Activated CD8-positive, alpha-beta T cell treated with anti-CD3 and anti-CD28 coated beads, Interleukin-2, amount 10 ng/mL, durations not matched to agents 7 days and 5 days (primary cell): ENCODE measurements at regions of chr9 and their contacts with region 1.

Region 1: GRCh38 chr9:97598461-97599288 is 34.5 kb downstream of the TSTD2 start:
- DNase-seq: peak; percentile 86
- ATAC-seq: peak; percentile 93
- H3K4me3 Mint-ChIP-seq: no peak overlapping the region
- H3K27ac Mint-ChIP-seq: no peak overlapping the region
- H3K4me1 Mint-ChIP-seq: peaks cover 5% of the 10 kb centered on the region
- H3K27me3 Mint-ChIP-seq: peaks cover 1% of the 10 kb centered on the region

Region 2: GRCh38 chr9:96854073-96854876 is 744.4 kb before region 1 on chr9 and contains the start of gene ZNF782:
- CTCF ChIA-PET with region 1: interaction called, 18 read pairs
- POLR2A ChIA-PET with region 1: no interaction called
- DNase-seq: peak; percentile 90
- ATAC-seq: peak; percentile 95
- H3K4me3 Mint-ChIP-seq: peak within 1 kb of the TSS; percentile 100
- H3K27ac Mint-ChIP-seq: peak within 1 kb of the TSS; percentile 98
- H3K4me1 Mint-ChIP-seq: peaks cover 27% of the 10 kb centered on the region
- H3K27me3 Mint-ChIP-seq: peaks cover 16% of the 10 kb centered on the region
- total RNA-seq, gene ZNF782: 3.9 to 4.3 TPM

Region 3: DNA sequence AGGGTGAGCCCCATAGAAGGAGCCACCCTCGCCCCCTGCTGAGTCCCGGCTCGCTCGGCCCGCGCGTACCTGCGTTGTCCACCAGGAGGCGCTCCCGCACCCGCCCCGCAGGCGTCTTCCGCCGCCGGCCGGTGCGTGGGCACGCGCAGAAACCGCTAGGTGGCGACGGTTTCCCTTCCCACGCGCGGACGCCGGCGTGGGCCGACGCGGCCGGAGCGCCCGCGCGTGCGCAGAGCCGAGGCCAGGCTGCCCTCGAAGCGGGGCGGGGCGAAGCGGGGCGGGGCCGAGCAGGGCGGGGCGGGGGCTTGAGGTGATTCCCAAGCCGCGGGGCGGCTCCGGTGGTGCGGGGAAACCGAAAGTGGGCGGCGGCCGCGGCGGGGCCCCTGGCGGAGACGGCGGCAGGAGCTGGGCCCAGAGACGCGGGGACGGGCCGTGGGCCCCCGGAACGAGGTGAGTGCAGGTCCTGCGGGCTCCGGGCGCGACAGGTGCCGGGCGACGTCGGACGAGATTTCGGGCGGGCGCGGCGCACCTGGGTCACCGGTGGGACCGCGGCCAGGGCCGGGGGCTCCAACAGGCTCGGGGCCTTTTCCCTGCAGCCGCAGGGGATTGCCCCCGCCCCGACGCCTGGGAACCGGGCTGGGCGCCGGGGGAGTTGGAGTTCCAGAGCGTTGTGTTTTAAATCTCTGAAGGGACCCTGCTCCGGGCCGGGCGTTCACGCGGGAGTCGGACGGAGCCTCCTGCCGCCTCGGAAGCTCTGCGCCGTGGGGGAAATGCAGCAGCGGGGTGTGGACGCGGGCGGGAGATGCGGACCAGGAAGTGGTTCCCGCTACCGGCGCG is 186.7 kb before region 1 on chr9 and contains the start of gene TDRD7:
- CTCF ChIA-PET with region 1: interaction called, 49 read pairs
- POLR2A ChIA-PET with region 1: no interaction called
- DNase-seq: peak; percentile 88
- ATAC-seq: peak; percentile 87
- H3K4me3 Mint-ChIP-seq: peak within 1 kb of the TSS; percentile 82
- H3K27ac Mint-ChIP-seq: peak within 1 kb of the TSS; percentile 74
- H3K4me1 Mint-ChIP-seq: peaks cover 28% of the 10 kb centered on the region
- H3K27me3 Mint-ChIP-seq: peaks cover 25% of the 10 kb centered on the region
- total RNA-seq, gene TDRD7: 9.3 to 9.6 TPM

Region 4: DNA sequence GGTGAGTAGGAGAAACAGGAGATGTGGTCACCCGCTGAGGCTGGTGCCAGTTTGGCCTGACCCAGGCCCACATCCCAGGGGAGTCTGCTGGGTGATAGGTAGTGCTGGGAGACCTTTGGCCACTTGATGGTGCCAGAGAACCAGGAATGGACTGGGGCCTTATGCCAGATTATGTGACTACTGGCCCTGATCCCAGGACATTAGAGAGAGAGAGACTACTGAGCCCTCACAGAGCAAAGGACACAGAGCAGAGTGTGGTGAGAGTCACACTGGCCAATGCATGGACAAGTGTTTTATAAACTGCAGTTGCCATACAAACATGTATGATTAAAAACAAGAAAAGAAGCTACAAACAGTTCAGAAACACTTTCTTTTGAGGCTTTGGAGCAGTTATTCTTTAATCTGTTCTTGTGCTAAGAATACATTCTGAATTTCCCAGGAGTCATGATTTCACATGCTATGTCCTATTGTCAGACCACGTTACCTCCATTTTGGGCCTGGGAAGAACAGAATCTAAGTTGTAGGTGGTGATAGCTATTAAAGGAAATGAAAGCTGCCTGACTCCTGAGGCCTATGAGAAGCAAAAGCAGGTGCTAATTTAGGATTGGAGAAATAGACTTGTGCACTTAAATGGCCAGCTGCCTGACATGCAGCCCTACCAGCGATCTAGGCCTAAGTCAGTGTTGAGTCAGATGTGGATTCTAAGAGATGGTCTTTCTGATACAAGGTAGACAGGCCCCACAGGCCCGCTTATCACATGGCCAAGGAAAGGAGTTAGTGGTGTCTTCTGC is 129.8 kb before region 1 on chr9:
- CTCF ChIA-PET with region 1: interaction called, 172 read pairs
- POLR2A ChIA-PET with region 1: no interaction called
- DNase-seq: peak; percentile 43
- ATAC-seq: peak; percentile 64
- H3K4me3 Mint-ChIP-seq: no peak overlapping the region
- H3K27ac Mint-ChIP-seq: no peak overlapping the region
- H3K4me1 Mint-ChIP-seq: no peaks in the 10 kb centered on the region
- H3K27me3 Mint-ChIP-seq: no peaks in the 10 kb centered on the region

Region 5: GRCh38 chr9:97510797-97511761 is 87.6 kb before region 1 on chr9:
- CTCF ChIA-PET with region 1: interaction called, 10 read pairs
- POLR2A ChIA-PET with region 1: no interaction called
- DNase-seq: no peak
- ATAC-seq: no peak
- H3K4me3 Mint-ChIP-seq: no peak overlapping the region
- H3K27ac Mint-ChIP-seq: no peak overlapping the region
- H3K4me1 Mint-ChIP-seq: peaks cover 3% of the 10 kb centered on the region
- H3K27me3 Mint-ChIP-seq: peaks cover 6% of the 10 kb centered on the region

Region 6: DNA sequence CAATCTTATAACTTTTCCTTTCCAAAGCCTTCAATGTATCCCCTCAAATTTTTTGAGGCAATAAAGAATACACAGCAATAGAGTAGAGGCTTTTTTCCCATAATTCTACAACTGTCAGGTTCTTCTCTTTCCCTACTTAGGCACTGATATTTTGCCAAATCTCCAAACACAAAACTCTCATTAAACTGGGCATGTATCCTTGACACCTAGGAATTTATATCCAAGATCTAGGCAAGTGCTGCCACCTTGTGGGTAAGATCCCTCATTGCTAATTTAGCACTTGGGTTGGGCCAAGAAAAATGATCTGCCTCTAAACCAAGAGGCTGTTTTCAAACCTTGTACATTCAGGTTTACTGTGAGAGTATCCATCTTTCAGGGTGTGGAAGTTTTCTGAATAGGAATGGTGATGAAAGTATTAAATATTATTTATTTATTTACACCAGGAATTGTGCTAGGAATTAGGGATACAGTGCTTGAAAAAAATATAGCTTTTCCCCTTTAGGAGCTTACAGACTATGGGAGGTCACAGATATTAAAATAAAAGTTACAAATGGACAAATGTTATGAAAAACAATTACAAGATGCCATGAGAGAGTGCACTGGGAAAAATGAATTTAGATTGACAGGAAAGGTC is 16.9 kb after region 1 on chr9:
- CTCF ChIA-PET with region 1: interaction called, 150 read pairs
- POLR2A ChIA-PET with region 1: no interaction called
- DNase-seq: peak; percentile 75
- ATAC-seq: no peak
- H3K4me3 Mint-ChIP-seq: no peak overlapping the region
- H3K27ac Mint-ChIP-seq: no peak overlapping the region
- H3K4me1 Mint-ChIP-seq: peaks cover 11% of the 10 kb centered on the region
- H3K27me3 Mint-ChIP-seq: no peaks in the 10 kb centered on the region